Activated CD4-positive, alpha-beta T cell treated with anti-CD3 and anti-CD28 coated beads for 36 hours (primary cell): ENCODE measurements at regions of chr3 and their contacts with region 1.

Region 1: GRCh38 chr3:48656061-48656840 is 6.4 kb downstream of the CELSR3 start:
- DNase-seq: peak; percentile 94
- ATAC-seq: peak; percentile 83
- H3K4me3 Mint-ChIP-seq: peak overlapping the region; percentile 71
- H3K27ac Mint-ChIP-seq: peak overlapping the region; percentile 87
- H3K4me1 Mint-ChIP-seq: peaks cover 6% of the 10 kb centered on the region
- H3K27me3 Mint-ChIP-seq: peaks cover 16% of the 10 kb centered on the region

Region 2: GRCh38 chr3:48301020-48301796 is 355.0 kb before region 1 on chr3:
- CTCF ChIA-PET with region 1: no interaction called
- POLR2A ChIA-PET with region 1: no interaction called
- intact Hi-C with region 1: loop called in 1 of 2 experiments (anchors 1 kb)
- DNase-seq: peak; percentile 97
- ATAC-seq: peak; percentile 85
- H3K4me3 Mint-ChIP-seq: peak within 1 kb of the TSS; percentile 92
- H3K27ac Mint-ChIP-seq: peak within 1 kb of the TSS; percentile 98
- H3K4me1 Mint-ChIP-seq: peaks cover 27% of the 10 kb centered on the region
- H3K27me3 Mint-ChIP-seq: no peaks in the 10 kb centered on the region

Region 3: GRCh38 chr3:48472915-48473616 is 183.2 kb before region 1 on chr3:
- CTCF ChIA-PET with region 1: no interaction called
- POLR2A ChIA-PET with region 1: no interaction called
- intact Hi-C with region 1: loop called in 1 of 2 experiments (anchors 1 kb)
- DNase-seq: peak; percentile 99
- ATAC-seq: peak; percentile 90
- H3K4me3 Mint-ChIP-seq: peak overlapping the region; percentile 74
- H3K27ac Mint-ChIP-seq: peak overlapping the region; percentile 93
- H3K4me1 Mint-ChIP-seq: peaks cover 49% of the 10 kb centered on the region
- H3K27me3 Mint-ChIP-seq: no peaks in the 10 kb centered on the region

Region 4: DNA sequence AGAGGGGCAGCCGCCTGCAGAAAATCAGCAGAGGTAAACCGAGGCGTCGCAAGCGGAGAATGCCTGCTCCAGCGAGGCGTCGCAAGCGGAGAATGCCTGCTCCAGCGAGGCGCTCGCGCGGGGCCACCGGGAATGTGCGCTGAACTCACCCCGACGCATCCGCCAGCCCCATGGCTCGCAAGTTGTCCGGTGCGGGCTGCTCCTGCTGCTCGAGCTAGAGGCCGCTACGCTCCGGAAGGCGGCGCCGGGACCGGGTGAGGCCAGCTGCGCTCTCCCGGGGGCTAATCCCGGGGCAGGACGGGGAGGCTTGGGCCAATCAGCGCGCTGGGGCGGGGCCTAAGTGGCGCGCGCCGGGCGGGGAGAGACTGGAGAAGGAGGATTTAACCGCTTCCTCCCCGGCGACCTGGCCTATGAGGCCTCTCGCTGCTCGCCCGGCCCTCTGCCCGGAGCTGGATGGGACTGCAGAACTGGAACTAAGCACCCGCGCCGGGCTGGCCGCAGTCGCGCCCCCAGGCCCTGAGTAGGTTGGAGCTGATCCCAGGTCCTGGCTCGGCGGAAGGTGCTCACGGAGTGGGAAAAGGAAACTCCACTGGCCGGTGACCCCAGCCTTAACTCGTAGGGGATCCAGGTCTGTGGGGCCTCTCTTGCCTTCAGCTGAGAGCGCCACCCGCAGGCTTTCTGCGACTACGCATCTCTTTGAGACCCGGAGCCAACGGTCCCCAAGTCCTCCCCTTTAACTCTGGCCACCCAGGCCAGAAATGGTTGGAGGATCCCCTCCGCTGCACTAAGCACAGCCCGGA is 20.8 kb before region 1 on chr3 and contains the start of gene SLC26A6:
- CTCF ChIA-PET with region 1: interaction called, 9 read pairs
- POLR2A ChIA-PET with region 1: no interaction called
- intact Hi-C with region 1: loop called (anchors 1 to 2 kb)
- DNase-seq: peak; percentile 97
- ATAC-seq: peak; percentile 97
- H3K4me3 Mint-ChIP-seq: peak within 1 kb of the TSS; percentile 84
- H3K27ac Mint-ChIP-seq: peak within 1 kb of the TSS; percentile 76
- H3K4me1 Mint-ChIP-seq: peaks cover 13% of the 10 kb centered on the region
- H3K27me3 Mint-ChIP-seq: no peaks in the 10 kb centered on the region
- total RNA-seq, gene SLC26A6: 35.0 to 38.5 TPM